Psoas muscle (tissue), 8 donors: ENCODE measurements at regions of chr19 and their contacts with region 1.

Region 1: DNA sequence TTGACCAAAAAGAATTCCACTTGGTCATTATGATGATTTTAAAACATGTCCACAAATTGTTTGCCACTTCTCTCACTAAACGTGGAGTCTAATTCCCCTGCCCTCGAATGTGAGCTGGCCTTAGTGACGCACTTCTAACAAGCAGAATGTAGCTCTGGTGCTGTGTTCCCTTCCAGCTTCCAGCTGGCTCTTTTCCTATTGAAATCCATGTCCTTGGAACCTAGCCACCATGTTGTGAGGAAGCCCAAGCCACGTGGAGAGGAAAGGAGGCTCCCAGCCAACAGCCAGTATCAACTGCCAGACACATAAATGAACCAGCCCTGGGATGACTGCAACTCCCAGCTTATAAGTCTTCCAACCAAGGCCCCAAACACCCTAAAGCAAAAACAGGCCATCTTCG is 23.6 kb upstream of the CEBPA start:
- DNase-seq: peak; percentile 72 to 87
- ATAC-seq: peak; percentile 90 to 97 (median 94)
- H3K4me3 ChIP-seq: no peak overlapping the region
- H3K27ac ChIP-seq: peak overlapping the region; percentile 75
- H3K4me1 ChIP-seq: peaks cover 5% of the 10 kb centered on the region
- H3K27me3 ChIP-seq: peaks cover 0 to 5% (median 0%) of the 10 kb centered on the region in 3 donors
- CTCF ChIP-seq: no peak

Region 2: DNA sequence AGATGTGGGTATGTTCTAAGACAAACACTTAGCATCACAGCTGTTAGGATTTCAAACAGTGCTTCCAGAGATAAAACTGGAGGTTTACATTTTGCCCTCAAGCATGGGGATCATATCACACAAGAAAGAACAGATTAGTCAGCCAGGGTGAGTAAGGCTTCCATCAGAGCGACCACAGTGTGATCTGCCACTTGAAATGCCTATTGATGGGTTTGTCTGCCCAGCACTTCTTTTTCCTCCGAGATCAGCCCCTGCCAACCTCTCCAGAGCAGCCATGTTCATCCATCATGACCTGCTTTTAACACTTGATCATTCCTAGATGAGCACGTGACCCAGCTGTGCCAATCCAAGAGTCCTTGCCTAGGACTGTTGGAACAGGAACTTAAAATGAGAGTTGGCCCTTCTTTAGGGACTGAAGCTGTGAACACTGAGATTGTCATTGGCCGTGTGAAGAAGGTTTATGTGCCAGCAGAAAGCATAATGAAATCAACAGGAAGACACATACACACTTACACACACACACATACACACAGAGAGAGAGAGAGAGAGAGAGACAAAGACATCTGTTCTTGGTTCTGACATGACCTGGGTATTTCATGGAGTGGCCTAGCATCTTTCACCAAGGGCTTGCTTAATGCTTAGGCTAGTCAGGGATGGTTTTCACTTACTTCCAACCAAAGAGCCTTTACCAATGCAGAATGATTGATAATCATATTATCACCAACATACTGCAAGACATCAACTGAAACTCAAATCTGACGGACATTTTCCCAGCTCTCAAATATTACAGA is 42.3 kb after region 1 on chr19:
- intact Hi-C with region 1: loop called in 1 of 2 experiments (anchors 5 kb)
- DNase-seq: no peak
- ATAC-seq: peak in 1 of 4 donors; percentile 43
- H3K4me3 ChIP-seq: no peak overlapping the region
- H3K27ac ChIP-seq: no peak overlapping the region
- H3K4me1 ChIP-seq: no peaks in the 10 kb centered on the region
- H3K27me3 ChIP-seq: peaks cover 0 to 2% (median 0%) of the 10 kb centered on the region in 3 donors
- CTCF ChIP-seq: no peak